Thyroid gland (tissue), 4 donors: ENCODE measurements at regions of chr1 and their contacts with region 1.

Region 1: DNA sequence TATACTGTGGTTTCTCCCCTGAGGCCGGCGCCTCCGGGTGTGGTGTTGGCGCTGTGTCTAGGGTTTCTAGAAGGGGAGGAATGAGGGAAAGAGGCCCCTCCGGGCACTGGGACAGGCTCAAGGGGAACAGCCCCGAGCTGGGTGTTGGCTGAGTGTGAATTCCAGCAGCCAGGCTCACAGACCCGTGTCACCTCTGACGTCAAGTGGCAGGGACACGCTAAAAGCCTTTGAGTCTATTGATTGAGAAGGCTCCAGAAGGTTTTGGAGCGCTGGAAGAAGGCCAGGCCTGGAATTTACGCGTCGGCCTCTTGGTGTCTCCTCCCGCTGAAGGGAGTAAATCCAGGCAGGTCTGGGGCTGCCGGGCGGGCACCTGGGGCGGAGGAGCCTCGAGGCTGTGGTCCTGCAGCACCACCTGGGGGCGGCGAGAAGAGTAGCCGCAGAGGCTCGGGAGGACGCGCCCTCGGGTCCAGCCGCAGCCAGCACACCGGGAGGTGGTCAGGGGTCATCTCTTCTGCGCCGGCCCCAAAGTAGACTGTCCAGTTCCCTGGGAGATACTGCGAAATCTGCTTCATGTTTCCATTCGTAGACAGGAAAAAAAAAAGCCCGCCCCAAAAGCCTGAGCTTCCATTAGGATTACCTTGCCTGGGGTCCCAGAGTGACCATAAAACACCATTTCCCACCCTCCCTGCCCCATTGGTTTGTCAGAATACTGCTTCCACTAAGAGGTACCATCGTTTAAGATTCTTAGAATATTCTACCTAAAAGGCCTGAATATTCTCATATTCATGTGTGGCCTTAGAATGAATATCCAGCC is 61.7 kb downstream of the TLR5 start:
- DNase-seq: peak; percentile 97 to 98
- H3K4me3 ChIP-seq: peak overlapping the region in 1 of 3 donors; percentile 14
- H3K27ac ChIP-seq: peak overlapping the region; percentile 54 to 86 (median 75)
- H3K4me1 ChIP-seq: peaks cover 0 to 4% of the 10 kb centered on the region in 2 donors
- H3K27me3 ChIP-seq: no peaks in the 10 kb centered on the region
- CTCF ChIP-seq: peak; percentile 84 to 99 (median 97)
- POLR2A ChIP-seq: peak in 1 of 2 donors; percentile 77

Region 2: DNA sequence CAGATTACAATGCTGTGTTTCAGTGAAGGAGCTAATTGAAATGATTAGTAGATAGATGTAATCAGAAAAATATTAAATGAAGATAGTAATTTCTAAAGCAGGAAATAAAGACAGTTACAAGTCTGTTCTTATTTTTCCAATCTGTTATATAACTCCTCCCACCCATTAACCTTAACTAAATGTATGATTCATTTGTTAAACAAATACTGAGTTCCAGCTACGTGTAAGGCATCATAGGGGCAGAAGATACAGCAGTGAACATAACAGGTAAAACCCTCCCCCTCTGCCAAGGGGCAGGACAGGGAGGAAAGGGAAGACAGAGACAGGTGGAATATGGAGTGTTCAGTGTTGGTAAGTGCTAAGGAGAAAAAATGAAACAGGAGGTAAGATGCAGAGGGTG is 344.4 kb before region 1 on chr1 and contains the start of gene FAM177B:
- intact Hi-C with region 1: loop called (anchors 5 kb)
- DNase-seq: no peak
- H3K4me3 ChIP-seq: no peak within 1 kb of the TSS
- H3K27ac ChIP-seq: no peak within 1 kb of the TSS
- H3K4me1 ChIP-seq: no peaks in the 10 kb centered on the region
- H3K27me3 ChIP-seq: no peaks in the 10 kb centered on the region
- CTCF ChIP-seq: no peak
- POLR2A ChIP-seq: no peak
- total RNA-seq, gene FAM177B: 0.33 TPM in 1 of 4 donors, not detected in the others

Region 3: DNA sequence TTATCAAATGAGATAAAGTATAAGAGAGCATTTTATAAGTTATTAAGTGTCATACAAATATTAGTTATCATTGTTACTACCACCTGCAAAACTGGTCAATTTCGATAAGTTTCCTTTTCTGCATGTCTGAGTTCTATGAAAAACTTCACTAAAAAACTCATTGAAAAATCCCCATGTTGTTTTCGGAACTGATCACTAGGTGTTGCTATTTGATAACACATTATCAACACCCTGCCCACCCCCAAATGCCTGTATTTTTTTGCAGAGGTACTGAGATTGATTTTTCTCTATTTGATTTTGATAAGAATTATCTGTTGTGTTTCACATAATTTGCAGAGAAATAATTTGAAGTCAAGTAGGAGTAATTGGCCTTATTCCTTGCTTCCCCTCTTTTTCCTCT is 288.6 kb before region 1 on chr1:
- intact Hi-C with region 1: loop called (anchors 5 kb)
- DNase-seq: no peak
- H3K4me3 ChIP-seq: no peak overlapping the region
- H3K27ac ChIP-seq: no peak overlapping the region
- H3K4me1 ChIP-seq: peaks cover 0 to 6% of the 10 kb centered on the region in 2 donors
- H3K27me3 ChIP-seq: no peaks in the 10 kb centered on the region
- CTCF ChIP-seq: peak in 4 of 6 experiments; percentile 53 to 87 (median 69)
- POLR2A ChIP-seq: no peak